ENCODE measurements at regions of chr1 and their contacts with region 1.

Region 1: DNA sequence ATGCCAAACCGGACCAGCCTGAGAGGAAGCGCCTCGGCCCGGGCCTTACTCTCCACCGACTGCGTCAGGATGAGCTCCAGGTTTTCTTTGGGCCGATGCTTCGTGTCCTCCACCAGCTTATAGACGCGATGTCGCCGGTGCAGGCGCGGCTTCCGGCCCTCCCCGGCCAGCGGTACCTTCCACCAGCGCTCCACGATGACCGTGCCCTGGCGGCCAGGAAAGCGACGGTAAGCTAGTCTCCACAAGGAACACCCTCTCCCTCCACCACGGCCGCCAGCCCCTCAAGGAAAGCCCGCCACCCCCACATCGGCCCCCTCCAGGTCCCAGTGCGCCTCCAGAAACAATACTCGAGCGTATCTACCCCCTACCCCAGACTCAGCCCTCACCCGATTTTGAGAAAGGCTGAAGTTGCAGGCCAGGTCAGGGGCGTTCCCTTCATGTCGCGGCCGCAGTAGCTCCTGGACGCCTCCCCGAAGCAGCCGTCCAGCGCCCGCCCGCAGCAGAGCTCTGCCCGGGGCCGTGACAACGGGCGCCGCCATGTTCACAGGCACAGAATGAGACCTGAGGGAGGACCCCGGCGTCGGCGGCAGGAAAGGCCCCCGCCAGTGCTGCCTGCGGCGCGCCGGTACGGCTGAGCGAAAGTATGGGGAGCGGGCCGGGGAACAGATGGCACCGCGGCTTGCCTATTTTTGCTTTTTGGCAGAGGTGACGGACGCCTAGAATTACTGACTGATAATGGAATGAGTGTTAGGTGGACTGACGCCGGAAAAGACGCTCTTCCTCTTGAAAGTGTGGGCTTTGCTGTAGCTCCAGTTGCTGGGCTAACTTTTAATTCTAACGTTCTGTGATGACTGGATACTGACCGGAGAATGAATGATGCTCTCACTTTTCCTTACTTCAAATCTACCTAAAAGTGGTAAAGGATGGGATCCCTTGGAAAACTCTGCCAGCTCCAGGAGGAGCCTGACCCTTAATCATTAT is at the start of gene MRPL9:
- DNase-seq: peak; percentile 84 to 88
- ATAC-seq: peak; percentile 97 to 99 (median 98)
- H3K4me3 ChIP-seq: peak within 1 kb of the TSS; percentile 76
- H3K4me3 Mint-ChIP-seq: peak within 1 kb of the TSS; percentile 98
- H3K27ac ChIP-seq: peak within 1 kb of the TSS; percentile 91
- H3K27ac Mint-ChIP-seq: peak within 1 kb of the TSS; percentile 96 to 99
- H3K4me1 ChIP-seq: peaks cover 11% of the 10 kb centered on the region
- H3K4me1 Mint-ChIP-seq: peaks cover 22 to 23% of the 10 kb centered on the region in 2 donors
- H3K27me3 ChIP-seq: no peaks in the 10 kb centered on the region
- H3K27me3 Mint-ChIP-seq: no peaks in the 10 kb centered on the region
- CTCF ChIP-seq: no peak
- total RNA-seq, gene MRPL9: 93.6 to 110 (median 107) TPM

Region 2: GRCh38 chr1:151790071-151790940 is 27.1 kb after region 1 on chr1 and contains the start of gene TDRKH:
- intact Hi-C with region 1: loop called (anchors 1 kb)
- DNase-seq: peak; percentile 96 to 99
- ATAC-seq: peak; percentile 92 to 98 (median 94)
- H3K4me3 ChIP-seq: peak within 1 kb of the TSS; percentile 96
- H3K4me3 Mint-ChIP-seq: peak within 1 kb of the TSS; percentile 100
- H3K27ac ChIP-seq: peak within 1 kb of the TSS; percentile 59
- H3K27ac Mint-ChIP-seq: peak within 1 kb of the TSS; percentile 93 to 94
- H3K4me1 ChIP-seq: peaks cover 9% of the 10 kb centered on the region
- H3K4me1 Mint-ChIP-seq: peaks cover 20 to 34% of the 10 kb centered on the region in 2 donors
- H3K27me3 ChIP-seq: no peaks in the 10 kb centered on the region
- H3K27me3 Mint-ChIP-seq: no peaks in the 10 kb centered on the region
- CTCF ChIP-seq: peak; percentile 17
- total RNA-seq, gene TDRKH: 6.3 to 14.5 (median 8.0) TPM

Measured in natural killer cell (primary cell).